ENCODE measurements at regions of chr12 and their contacts with region 1.

Region 1: GRCh38 chr12:51871126-51871525 is 16.8 kb upstream of the ANKRD33 start:
- DNase-seq: peak; percentile 59 to 85 (median 80)
- ATAC-seq: peak in 1 of 2 donors; percentile 19
- H3K4me3 ChIP-seq: no peak overlapping the region
- H3K27ac ChIP-seq: no peak overlapping the region
- H3K4me1 ChIP-seq: peaks cover 3% of the 10 kb centered on the region
- H3K27me3 ChIP-seq: no peaks in the 10 kb centered on the region

Region 2: GRCh38 chr12:51814311-51815088 is 56.6 kb before region 1 on chr12:
- intact Hi-C with region 1: loop called in 1 of 4 experiments (anchors 10 kb)
- DNase-seq: peak; percentile 87 to 95 (median 94)
- ATAC-seq: peak; percentile 86 to 89
- H3K4me3 ChIP-seq: peak overlapping the region; percentile 62
- H3K27ac ChIP-seq: peak overlapping the region; percentile 11
- H3K4me1 ChIP-seq: no peaks in the 10 kb centered on the region
- H3K27me3 ChIP-seq: no peaks in the 10 kb centered on the region

Region 3: GRCh38 chr12:52164611-52165010 is 293.5 kb after region 1 on chr12:
- intact Hi-C with region 1: no loop called
- DNase-seq: peak in 1 of 3 donors; percentile 23
- ATAC-seq: no peak
- H3K4me3 ChIP-seq: no peak overlapping the region
- H3K27ac ChIP-seq: no peak overlapping the region
- H3K4me1 ChIP-seq: peaks cover 2% of the 10 kb centered on the region
- H3K27me3 ChIP-seq: no peaks in the 10 kb centered on the region

Measured in right cardiac atrium (tissue), 5 donors.